ENCODE measurements at regions of chr1 and their contacts with region 1.

Region 1: DNA sequence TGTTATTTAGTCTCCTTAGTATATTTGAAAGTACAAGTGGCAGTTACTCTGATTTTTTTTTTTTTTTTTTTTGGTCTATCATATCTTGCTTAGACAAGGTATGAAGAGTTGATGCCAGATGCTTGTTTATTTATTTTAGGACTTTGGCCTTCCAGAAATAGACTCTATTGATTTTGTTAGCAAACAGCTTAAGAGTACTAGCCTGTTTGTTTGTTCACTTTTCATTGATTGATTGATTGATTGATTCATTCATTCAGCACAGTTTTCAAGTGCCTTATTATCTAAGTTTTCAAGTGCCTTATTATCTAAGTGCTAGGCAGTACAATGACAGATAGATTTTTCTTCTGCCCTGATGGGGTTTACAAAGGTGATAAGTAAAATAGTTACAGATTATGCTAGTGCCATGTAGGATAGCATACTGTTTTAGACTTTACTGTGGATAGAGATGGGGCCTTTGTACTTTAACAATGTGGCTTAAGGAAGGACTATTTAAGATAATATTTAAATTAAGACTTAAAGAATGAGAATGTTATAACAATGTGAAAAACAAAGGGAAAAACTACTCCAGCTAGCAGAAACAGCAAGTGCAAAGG is 50.5 kb downstream of the MTF2 start:
- DNase-seq: no peak
- ATAC-seq: no peak
- H3K4me3 Mint-ChIP-seq: no peak overlapping the region
- H3K27ac Mint-ChIP-seq: no peak overlapping the region
- H3K4me1 Mint-ChIP-seq: no peaks in the 10 kb centered on the region
- H3K27me3 Mint-ChIP-seq: no peaks in the 10 kb centered on the region
- CTCF ChIP-seq: no peak

Region 2: DNA sequence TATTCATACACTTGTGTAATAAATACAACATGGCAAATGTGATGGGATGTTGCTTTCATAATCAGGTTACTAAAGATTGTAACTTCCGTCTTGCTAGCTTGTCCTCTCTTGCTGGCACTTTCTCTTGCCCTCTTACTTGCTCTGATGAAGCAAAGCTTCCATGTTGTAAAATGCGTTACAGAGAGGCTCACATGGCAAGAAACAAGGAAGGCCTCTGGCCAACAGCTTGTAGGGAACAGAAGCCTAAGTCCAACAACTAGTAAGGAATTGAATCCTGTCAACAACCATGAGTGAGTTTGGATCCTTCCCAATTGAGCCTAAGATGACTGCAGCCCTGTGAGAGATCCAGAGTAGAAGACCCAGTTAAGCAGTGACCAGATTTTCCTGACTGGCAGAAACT is 35.2 kb after region 1 on chr1:
- CTCF ChIA-PET with region 1: no interaction called
- POLR2A ChIA-PET with region 1: no interaction called
- intact Hi-C with region 1: loop called (anchors 5 kb)
- DNase-seq: no peak
- ATAC-seq: no peak
- H3K4me3 Mint-ChIP-seq: no peak overlapping the region
- H3K27ac Mint-ChIP-seq: no peak overlapping the region
- H3K4me1 Mint-ChIP-seq: peaks cover 42% of the 10 kb centered on the region
- H3K27me3 Mint-ChIP-seq: no peaks in the 10 kb centered on the region
- CTCF ChIP-seq: no peak